ENCODE measurements at regions of chr1 and their contacts with region 1.

Region 1: DNA sequence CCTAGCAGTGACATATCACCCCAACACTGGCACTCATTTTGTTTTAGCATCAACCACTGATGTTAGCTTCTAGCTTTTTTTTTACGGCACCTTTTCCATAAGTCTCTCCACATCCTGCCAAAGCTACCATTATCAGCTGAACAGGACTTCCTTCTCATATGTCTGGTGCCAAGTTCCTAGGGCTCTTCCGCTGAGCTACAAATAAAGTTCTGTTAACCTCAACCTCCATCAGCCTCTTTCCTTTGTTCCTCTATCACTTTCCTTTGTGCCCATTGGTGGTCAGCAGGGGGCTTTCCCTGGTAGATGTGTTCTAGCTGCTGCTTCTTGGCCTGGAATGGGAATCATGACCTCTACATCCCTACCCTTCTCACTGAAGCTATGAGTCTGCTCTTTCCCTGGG is 163.8 kb downstream of the FAF1 start:
- DNase-seq: no peak
- H3K4me3 ChIP-seq: no peak overlapping the region
- H3K27ac ChIP-seq: no peak overlapping the region
- H3K4me1 ChIP-seq: peaks cover 0 to 5% (median 0%) of the 10 kb centered on the region in 4 donors
- H3K27me3 ChIP-seq: no peaks in the 10 kb centered on the region
- CTCF ChIP-seq: no peak
- EP300 ChIP-seq: no peak
- POLR2A ChIP-seq: no peak

Region 2: GRCh38 chr1:51189421-51190073 is 393.3 kb after region 1 on chr1:
- intact Hi-C with region 1: loop called (anchors 10 kb)
- DNase-seq: peak; percentile 31 to 88
- H3K4me3 ChIP-seq: no peak overlapping the region
- H3K27ac ChIP-seq: no peak overlapping the region
- H3K4me1 ChIP-seq: peaks cover 0 to 4% (median 0%) of the 10 kb centered on the region in 4 donors
- H3K27me3 ChIP-seq: no peaks in the 10 kb centered on the region
- CTCF ChIP-seq: peak in 5 of 7 experiments; percentile 78 to 86 (median 82)
- EP300 ChIP-seq: no peak
- POLR2A ChIP-seq: no peak

Measured in stomach (tissue), 19 donors.